Activated naive CD4-positive, alpha-beta T cell treated with anti-CD3 and anti-CD28 coated beads for 36 hours (primary cell): ENCODE measurements at regions of chr3 and their contacts with region 1.

Region 1: DNA sequence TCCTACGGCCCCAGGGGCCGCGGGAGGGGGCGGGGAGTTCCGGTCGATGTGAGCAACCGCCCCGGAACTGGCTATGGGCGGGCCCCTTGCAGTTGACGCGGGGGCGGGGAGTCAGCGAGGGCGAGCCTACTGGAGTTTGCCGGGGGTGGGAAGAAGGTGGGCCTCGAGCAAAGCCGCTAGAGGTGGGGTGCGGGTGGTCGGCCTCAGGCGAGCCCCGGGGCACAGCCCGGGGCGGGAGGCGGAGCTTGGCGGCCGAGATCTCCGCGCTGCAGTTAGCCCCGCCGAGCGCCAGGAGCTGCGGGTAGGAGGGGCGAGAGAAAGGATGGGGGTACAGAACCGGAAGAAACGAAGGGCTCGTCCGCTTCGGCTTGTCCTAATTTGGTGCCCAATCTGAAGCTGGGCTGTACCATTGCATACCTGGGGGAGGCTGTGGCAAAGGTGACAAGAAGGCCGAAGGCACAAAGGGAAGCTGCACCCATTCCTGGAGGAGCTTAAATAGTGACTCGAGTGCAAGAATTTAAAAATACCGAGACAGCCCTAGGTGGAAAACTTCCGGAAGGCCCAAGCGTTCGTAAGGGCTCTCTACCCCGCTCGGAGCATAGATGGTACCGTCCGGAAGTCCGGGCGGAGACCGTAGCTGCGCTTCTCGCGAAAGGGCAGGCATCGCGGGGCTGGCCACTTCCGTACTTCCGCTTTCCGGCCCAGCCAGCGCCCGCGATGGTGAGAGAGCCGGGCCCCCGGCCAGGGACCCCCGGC is at the starts of genes ARPC4 and TADA3:
- DNase-seq: peak; percentile 94
- H3K4me3 Mint-ChIP-seq: peak within 1 kb of the TSS; percentile 94
- H3K27ac Mint-ChIP-seq: peak within 1 kb of the TSS; percentile 100
- H3K4me1 Mint-ChIP-seq: peaks cover 67% of the 10 kb centered on the region
- H3K27me3 Mint-ChIP-seq: no peaks in the 10 kb centered on the region
- total RNA-seq, gene ARPC4: 141 to 144 TPM
- total RNA-seq, gene TADA3: 62.4 to 67.6 TPM

Region 2: GRCh38 chr3:9649791-9650521 is 142.6 kb before region 1 on chr3:
- CTCF ChIA-PET with region 1: no interaction called
- intact Hi-C with region 1: loop called (anchors 1 kb)
- DNase-seq: no peak
- H3K4me3 Mint-ChIP-seq: peak overlapping the region; percentile 94
- H3K27ac Mint-ChIP-seq: peak overlapping the region; percentile 86
- H3K4me1 Mint-ChIP-seq: peaks cover 32% of the 10 kb centered on the region
- H3K27me3 Mint-ChIP-seq: no peaks in the 10 kb centered on the region

Region 3: GRCh38 chr3:9779721-9780457 is 12.7 kb before region 1 on chr3:
- CTCF ChIA-PET with region 1: interaction called, 7 read pairs
- intact Hi-C with region 1: loop called (anchors 1 kb)
- DNase-seq: peak; percentile 47
- H3K4me3 Mint-ChIP-seq: no peak overlapping the region
- H3K27ac Mint-ChIP-seq: peak overlapping the region; percentile 91
- H3K4me1 Mint-ChIP-seq: peaks cover 56% of the 10 kb centered on the region
- H3K27me3 Mint-ChIP-seq: no peaks in the 10 kb centered on the region

Region 4: GRCh38 chr3:9843715-9844438 is 51.3 kb after region 1 on chr3 and contains the start of gene RPUSD3:
- CTCF ChIA-PET with region 1: no interaction called
- intact Hi-C with region 1: loop called (anchors 1 kb)
- DNase-seq: peak; percentile 98
- H3K4me3 Mint-ChIP-seq: peak within 1 kb of the TSS; percentile 98
- H3K27ac Mint-ChIP-seq: peak within 1 kb of the TSS; percentile 89
- H3K4me1 Mint-ChIP-seq: peaks cover 30% of the 10 kb centered on the region
- H3K27me3 Mint-ChIP-seq: no peaks in the 10 kb centered on the region
- total RNA-seq, gene RPUSD3: 82.0 to 83.7 TPM

Region 5: DNA sequence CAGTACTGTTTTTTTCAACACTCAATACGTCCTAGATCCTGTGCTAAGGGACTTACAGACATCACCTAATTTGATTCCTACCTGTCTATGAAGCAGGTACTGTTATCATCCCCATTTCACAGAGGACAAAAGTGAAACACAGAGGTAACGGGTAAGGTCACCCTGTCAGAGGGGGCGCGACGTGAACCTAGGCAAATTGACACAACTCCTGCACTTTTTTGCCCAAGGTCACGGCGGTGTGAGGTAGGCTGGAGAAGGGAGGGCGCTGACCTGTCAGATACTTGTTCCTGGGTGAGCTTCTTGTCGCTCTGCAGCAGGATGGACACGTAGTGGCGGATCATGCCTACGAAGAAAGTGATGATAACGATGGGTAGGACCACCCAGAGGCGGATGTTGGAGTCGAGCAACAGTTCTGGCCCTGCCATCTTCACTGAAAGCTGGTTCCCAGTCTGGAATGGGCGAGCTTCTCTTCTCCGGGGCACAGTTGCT is 193.7 kb after region 1 on chr3:
- CTCF ChIA-PET with region 1: no interaction called
- intact Hi-C with region 1: loop called (anchors 1 kb)
- DNase-seq: no peak
- H3K4me3 Mint-ChIP-seq: peak overlapping the region; percentile 97
- H3K27ac Mint-ChIP-seq: peak overlapping the region; percentile 99
- H3K4me1 Mint-ChIP-seq: peaks cover 39% of the 10 kb centered on the region
- H3K27me3 Mint-ChIP-seq: no peaks in the 10 kb centered on the region

Region 6: DNA sequence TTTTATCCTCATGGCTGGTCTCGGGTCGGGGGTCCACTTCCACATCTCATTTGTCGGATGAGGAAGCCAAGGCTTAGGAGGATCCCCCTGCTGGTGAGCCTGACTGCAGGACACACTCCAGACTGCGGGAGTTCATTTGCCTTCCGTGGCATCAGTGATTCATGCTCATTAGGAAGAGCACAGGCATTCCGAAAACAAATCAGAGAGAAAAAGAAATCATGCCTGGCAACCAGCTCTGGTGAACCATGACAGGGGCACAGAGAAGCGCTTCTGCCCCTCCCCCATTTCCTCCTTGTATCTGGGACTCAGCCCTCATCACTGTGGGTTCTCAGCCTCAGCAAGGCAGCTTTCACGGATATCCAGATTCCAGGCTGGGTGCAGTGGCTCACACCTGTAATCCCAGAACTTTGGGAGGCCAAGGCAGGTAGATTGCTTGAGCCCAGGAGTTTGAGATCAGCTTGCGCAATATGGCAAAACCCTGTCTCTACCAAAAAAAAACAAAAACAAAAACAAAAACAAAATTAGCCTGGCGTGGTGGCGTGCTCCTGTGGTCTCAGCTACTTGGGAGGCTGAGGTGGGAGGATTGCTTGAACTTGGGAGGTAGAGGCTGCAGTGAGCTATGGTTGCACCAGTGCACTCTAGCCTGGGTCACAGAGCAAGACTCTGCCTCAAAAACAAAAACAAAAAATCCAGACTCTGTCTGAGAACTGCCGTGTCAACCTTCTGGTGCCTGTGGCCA is 400.5 kb after region 1 on chr3:
- CTCF ChIA-PET with region 1: interaction called, 4 read pairs
- intact Hi-C with region 1: loop called (anchors 2 kb)
- DNase-seq: peak; percentile 93
- H3K4me3 Mint-ChIP-seq: peak overlapping the region; percentile 42
- H3K27ac Mint-ChIP-seq: peak overlapping the region; percentile 96
- H3K4me1 Mint-ChIP-seq: peaks cover 85% of the 10 kb centered on the region
- H3K27me3 Mint-ChIP-seq: no peaks in the 10 kb centered on the region